Caco-2 (cell line): ENCODE measurements at regions of chr3 and their contacts with region 1.

Region 1: GRCh38 chr3:170037463-170038433 is at the start of gene GPR160:
- DNase-seq: peak; percentile 87 to 88
- H3K4me3 ChIP-seq: peak within 1 kb of the TSS; percentile 80
- H3K4me3 Mint-ChIP-seq: peak within 1 kb of the TSS; percentile 80
- H3K27ac Mint-ChIP-seq: peak within 1 kb of the TSS; percentile 73
- H3K4me1 ChIP-seq: 0 out of 2 replicates have a peak, but pooled peaks cover 4% of the 10 kb centered on the region
- H3K4me1 Mint-ChIP-seq: peaks cover 14% of the 10 kb centered on the region
- H3K27me3 ChIP-seq: no peaks in the 10 kb centered on the region
- H3K27me3 Mint-ChIP-seq: no peaks in the 10 kb centered on the region
- CTCF ChIP-seq: peak; percentile 70 to 83
- total RNA-seq, gene GPR160: 14.8 and 16.1 TPM in 2 replicates

Region 2: DNA sequence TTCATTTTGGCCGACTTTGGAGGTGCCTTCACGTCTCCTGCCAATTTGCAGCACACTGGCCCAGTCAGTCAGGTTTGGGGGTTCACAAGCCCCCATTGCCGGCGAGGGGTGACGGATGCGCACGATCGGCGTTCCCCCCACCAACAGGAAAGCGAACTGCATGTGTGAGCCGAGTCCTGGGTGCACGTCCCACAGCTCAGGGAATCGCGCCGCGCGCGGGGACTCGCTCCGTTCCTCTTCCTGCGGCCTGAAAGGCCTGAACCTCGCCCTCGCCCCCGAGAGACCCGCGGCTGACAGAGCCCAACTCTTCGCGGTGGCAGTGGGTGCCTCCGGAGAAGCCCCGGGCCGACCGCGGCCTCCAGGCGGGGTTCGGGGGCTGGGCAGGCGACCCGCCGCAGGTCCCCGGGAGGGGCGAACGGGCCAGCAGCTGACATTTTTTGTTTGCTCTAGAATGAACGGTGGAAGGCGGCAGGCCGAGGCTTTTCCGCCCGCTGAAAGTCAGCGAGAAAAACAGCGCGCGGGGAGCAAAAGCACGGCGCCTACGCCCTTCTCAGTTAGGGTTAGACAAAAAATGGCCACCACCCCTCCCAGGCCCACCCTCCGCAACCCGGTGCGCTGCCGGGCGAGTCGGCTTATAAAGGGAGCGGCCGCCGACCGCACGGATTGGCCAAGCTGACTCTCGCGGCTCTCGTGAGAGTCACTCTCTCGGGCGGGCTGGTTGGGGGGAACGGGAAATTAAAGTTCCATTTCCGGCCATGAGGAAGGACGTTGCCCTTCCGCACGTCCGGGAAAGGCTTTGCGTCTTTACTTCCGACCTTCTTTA is 273.1 kb before region 1 on chr3 and contains the start of gene TERC:
- CTCF ChIA-PET with region 1: no interaction called
- POLR2A ChIA-PET with region 1: no interaction called
- intact Hi-C with region 1: loop called (anchors 5 kb)
- DNase-seq: peak; percentile 93 to 95
- H3K4me3 ChIP-seq: peak within 1 kb of the TSS; percentile 72
- H3K4me3 Mint-ChIP-seq: peak within 1 kb of the TSS; percentile 84
- H3K27ac Mint-ChIP-seq: peak within 1 kb of the TSS; percentile 89
- H3K4me1 ChIP-seq: no peaks in the 10 kb centered on the region
- H3K4me1 Mint-ChIP-seq: no peaks in the 10 kb centered on the region
- H3K27me3 ChIP-seq: no peaks in the 10 kb centered on the region
- H3K27me3 Mint-ChIP-seq: no peaks in the 10 kb centered on the region
- CTCF ChIP-seq: no peak
- total RNA-seq, gene TERC: 17.1 and 19.0 TPM in 2 replicates

Region 3: GRCh38 chr3:169863458-169863899 is 174.3 kb before region 1 on chr3:
- CTCF ChIA-PET with region 1: no interaction called
- POLR2A ChIA-PET with region 1: no interaction called
- intact Hi-C with region 1: loop called (anchors 1 kb)
- DNase-seq: peak; percentile 57 to 71
- H3K4me3 ChIP-seq: no peak overlapping the region
- H3K4me3 Mint-ChIP-seq: no peak overlapping the region
- H3K27ac Mint-ChIP-seq: no peak overlapping the region
- H3K4me1 ChIP-seq: no peaks in the 10 kb centered on the region
- H3K4me1 Mint-ChIP-seq: no peaks in the 10 kb centered on the region
- H3K27me3 ChIP-seq: no peaks in the 10 kb centered on the region
- H3K27me3 Mint-ChIP-seq: no peaks in the 10 kb centered on the region
- CTCF ChIP-seq: peak; percentile 70 to 82

Region 4: GRCh38 chr3:170078620-170079281 is 41.0 kb after region 1 on chr3:
- CTCF ChIA-PET with region 1: interaction called, 4 read pairs
- POLR2A ChIA-PET with region 1: interaction called, 4 read pairs
- intact Hi-C with region 1: loop called (anchors 1 kb)
- DNase-seq: peak; percentile 42 to 59
- H3K4me3 ChIP-seq: no peak overlapping the region
- H3K4me3 Mint-ChIP-seq: no peak overlapping the region
- H3K27ac Mint-ChIP-seq: no peak overlapping the region
- H3K4me1 ChIP-seq: peaks cover 44% of the 10 kb centered on the region
- H3K4me1 Mint-ChIP-seq: peaks cover 22% of the 10 kb centered on the region
- H3K27me3 ChIP-seq: no peaks in the 10 kb centered on the region
- H3K27me3 Mint-ChIP-seq: no peaks in the 10 kb centered on the region
- CTCF ChIP-seq: no peak